Endothelial cell of umbilical vein (primary cell): ENCODE measurements at regions of chr2 and their contacts with region 1.

Region 1: DNA sequence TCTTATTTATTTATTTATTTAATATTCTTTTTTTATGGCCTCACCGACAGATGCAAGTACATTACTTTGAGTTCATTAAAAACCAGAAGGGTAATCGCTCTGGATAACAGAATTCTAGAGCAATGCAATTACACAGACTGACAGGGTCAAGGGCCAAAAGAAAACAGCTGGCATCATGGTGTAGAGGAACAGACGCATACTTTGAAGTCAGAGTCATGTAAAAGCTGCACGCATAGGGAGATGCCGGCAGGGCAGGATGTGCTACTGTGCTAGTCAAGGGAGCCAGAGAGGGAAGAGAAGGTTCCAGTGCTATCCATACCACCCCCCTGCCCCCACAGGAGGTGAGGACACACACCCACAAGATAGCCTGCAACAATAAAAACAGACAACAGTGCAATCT is 115.2 kb upstream of the TFCP2L1 start:
- DNase-seq: no peak
- H3K4me3 ChIP-seq: no peak overlapping the region
- H3K27ac ChIP-seq: no peak overlapping the region
- H3K4me1 ChIP-seq: no peaks in the 10 kb centered on the region
- H3K27me3 ChIP-seq: no peaks in the 10 kb centered on the region
- CTCF ChIP-seq: no peak
- POLR2A ChIP-seq: no peak

Region 2: GRCh38 chr2:121377646-121378045 is 22.6 kb before region 1 on chr2:
- CTCF ChIA-PET with region 1: interaction called, 4 read pairs
- POLR2A ChIA-PET with region 1: no interaction called
- dilution Hi-C with region 1: no loop called
- intact Hi-C with region 1: loop called (anchors 2 kb)
- DNase-seq: peak; percentile 6
- H3K4me3 ChIP-seq: no peak overlapping the region
- H3K27ac ChIP-seq: no peak overlapping the region
- H3K4me1 ChIP-seq: no peaks in the 10 kb centered on the region
- H3K27me3 ChIP-seq: no peaks in the 10 kb centered on the region
- CTCF ChIP-seq: no peak
- POLR2A ChIP-seq: no peak

Region 3: GRCh38 chr2:121505005-121505404 is 104.8 kb after region 1 on chr2:
- CTCF ChIA-PET with region 1: interaction called, 4 read pairs
- POLR2A ChIA-PET with region 1: no interaction called
- dilution Hi-C with region 1: no loop called
- intact Hi-C with region 1: loop called (anchors 10 kb)
- DNase-seq: no peak
- H3K4me3 ChIP-seq: no peak overlapping the region
- H3K27ac ChIP-seq: no peak overlapping the region
- H3K4me1 ChIP-seq: peaks cover 9% of the 10 kb centered on the region
- H3K27me3 ChIP-seq: no peaks in the 10 kb centered on the region
- CTCF ChIP-seq: no peak
- POLR2A ChIP-seq: no peak

Region 4: GRCh38 chr2:121736462-121737341 is 336.5 kb after region 1 on chr2 and contains the start of gene NIFK:
- CTCF ChIA-PET with region 1: interaction called, 9 read pairs
- POLR2A ChIA-PET with region 1: no interaction called
- dilution Hi-C with region 1: no loop called
- intact Hi-C with region 1: loop called (anchors 5 kb)
- DNase-seq: peak; percentile 97
- H3K4me3 ChIP-seq: peak within 1 kb of the TSS; percentile 91 to 100 (median 99)
- H3K27ac ChIP-seq: peak within 1 kb of the TSS; percentile 59
- H3K4me1 ChIP-seq: peaks cover 9% of the 10 kb centered on the region
- H3K27me3 ChIP-seq: no peaks in the 10 kb centered on the region
- CTCF ChIP-seq: no peak
- POLR2A ChIP-seq: peak; percentile 85
- total RNA-seq, gene NIFK: 56.2 and 59.7 TPM in 2 replicates

Region 5: DNA sequence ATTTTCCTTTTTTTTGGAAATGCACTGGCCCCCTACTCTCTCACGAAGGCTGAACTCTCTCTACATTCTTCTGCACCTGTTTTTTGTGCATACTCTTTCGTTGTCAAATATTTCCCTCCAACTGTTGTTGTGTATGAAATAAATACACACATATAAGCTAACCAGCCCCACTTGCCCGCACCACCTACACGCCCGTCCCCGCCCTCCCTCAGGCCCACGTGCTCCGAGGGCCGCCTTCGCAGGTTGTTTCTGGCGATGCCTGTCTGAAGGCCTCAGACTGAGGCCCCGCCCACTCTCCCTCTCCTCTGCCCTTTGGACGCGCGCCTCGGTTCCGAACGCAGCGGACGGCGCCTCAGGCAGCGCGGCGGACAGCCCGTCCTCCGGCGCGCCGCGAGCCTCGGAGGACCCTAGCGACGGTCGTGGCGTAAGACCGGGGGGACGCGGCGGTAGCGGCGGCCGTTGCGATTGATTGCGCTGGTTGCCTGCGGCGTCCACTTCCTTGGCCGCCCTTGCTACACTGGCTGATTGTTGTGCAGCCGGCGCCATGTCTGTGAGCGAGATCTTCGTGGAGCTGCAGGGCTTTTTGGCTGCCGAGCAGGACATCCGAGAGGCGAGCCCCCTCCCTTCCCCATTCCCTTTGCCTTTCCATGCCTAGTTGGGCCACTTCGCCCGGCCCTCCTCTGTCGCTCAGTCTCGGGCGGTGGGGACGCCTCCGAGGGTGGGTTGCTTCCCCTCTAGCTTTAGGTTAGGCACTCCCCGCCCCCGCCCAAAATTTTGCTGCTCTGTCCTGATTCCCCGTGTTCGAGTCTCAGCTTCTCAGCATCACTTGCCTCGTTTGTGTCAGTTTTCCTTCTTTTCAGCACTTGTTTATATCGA is 355.3 kb after region 1 on chr2 and contains the start of gene TSN:
- CTCF ChIA-PET with region 1: interaction called, 3 read pairs
- POLR2A ChIA-PET with region 1: no interaction called
- dilution Hi-C with region 1: no loop called
- intact Hi-C with region 1: loop called (anchors 1 kb)
- DNase-seq: peak; percentile 98
- H3K4me3 ChIP-seq: peak within 1 kb of the TSS; percentile 83 to 97 (median 89)
- H3K27ac ChIP-seq: peak within 1 kb of the TSS; percentile 75
- H3K4me1 ChIP-seq: peaks cover 16% of the 10 kb centered on the region
- H3K27me3 ChIP-seq: no peaks in the 10 kb centered on the region
- CTCF ChIP-seq: no peak
- POLR2A ChIP-seq: peak; percentile 43
- total RNA-seq, gene TSN: 76.1 and 79.8 TPM in 2 replicates